CD4-positive, alpha-beta memory T cell (primary cell): ENCODE measurements at regions of chr12 and their contacts with region 1.

Region 1: GRCh38 chr12:14871886-14872285 is 13.8 kb downstream of the MGP start:
- DNase-seq: no peak
- H3K4me3 ChIP-seq: no peak overlapping the region
- H3K4me3 Mint-ChIP-seq: no peak overlapping the region
- H3K27ac ChIP-seq: no peak overlapping the region
- H3K27ac Mint-ChIP-seq: no peak overlapping the region
- H3K4me1 ChIP-seq: no peaks in the 10 kb centered on the region
- H3K4me1 Mint-ChIP-seq: no peaks in the 10 kb centered on the region
- H3K27me3 ChIP-seq: no peaks in the 10 kb centered on the region
- H3K27me3 Mint-ChIP-seq: peaks cover 10 to 14% of the 10 kb centered on the region in 2 donors

Region 2: GRCh38 chr12:14618983-14619382 is 252.9 kb before region 1 on chr12:
- CTCF ChIA-PET with region 1: no interaction called
- POLR2A ChIA-PET with region 1: no interaction called
- intact Hi-C with region 1: no loop called
- DNase-seq: peak in 2 of 5 donors; percentile 16 to 22
- H3K4me3 ChIP-seq: no peak overlapping the region
- H3K4me3 Mint-ChIP-seq: no peak overlapping the region
- H3K27ac ChIP-seq: no peak overlapping the region
- H3K27ac Mint-ChIP-seq: no peak overlapping the region
- H3K4me1 ChIP-seq: no peaks in the 10 kb centered on the region
- H3K4me1 Mint-ChIP-seq: peaks cover 0 to 2% (median 0%) of the 10 kb centered on the region in 4 donors
- H3K27me3 ChIP-seq: no peaks in the 10 kb centered on the region
- H3K27me3 Mint-ChIP-seq: peaks cover 20 to 28% of the 10 kb centered on the region in 2 donors

Region 3: GRCh38 chr12:14890701-14891100 is 18.8 kb after region 1 on chr12:
- CTCF ChIA-PET with region 1: interaction called, 4 read pairs
- POLR2A ChIA-PET with region 1: no interaction called
- intact Hi-C with region 1: loop called (anchors 2 kb)
- DNase-seq: no peak
- H3K4me3 ChIP-seq: no peak overlapping the region
- H3K4me3 Mint-ChIP-seq: no peak overlapping the region
- H3K27ac ChIP-seq: no peak overlapping the region
- H3K27ac Mint-ChIP-seq: no peak overlapping the region
- H3K4me1 ChIP-seq: no peaks in the 10 kb centered on the region
- H3K4me1 Mint-ChIP-seq: peaks cover 0 to 6% (median under 1%) of the 10 kb centered on the region in 4 donors
- H3K27me3 ChIP-seq: no peaks in the 10 kb centered on the region
- H3K27me3 Mint-ChIP-seq: peaks cover 0 to 6% of the 10 kb centered on the region in 2 donors